ENCODE measurements at regions of chr3 and their contacts with region 1.

Region 1: DNA sequence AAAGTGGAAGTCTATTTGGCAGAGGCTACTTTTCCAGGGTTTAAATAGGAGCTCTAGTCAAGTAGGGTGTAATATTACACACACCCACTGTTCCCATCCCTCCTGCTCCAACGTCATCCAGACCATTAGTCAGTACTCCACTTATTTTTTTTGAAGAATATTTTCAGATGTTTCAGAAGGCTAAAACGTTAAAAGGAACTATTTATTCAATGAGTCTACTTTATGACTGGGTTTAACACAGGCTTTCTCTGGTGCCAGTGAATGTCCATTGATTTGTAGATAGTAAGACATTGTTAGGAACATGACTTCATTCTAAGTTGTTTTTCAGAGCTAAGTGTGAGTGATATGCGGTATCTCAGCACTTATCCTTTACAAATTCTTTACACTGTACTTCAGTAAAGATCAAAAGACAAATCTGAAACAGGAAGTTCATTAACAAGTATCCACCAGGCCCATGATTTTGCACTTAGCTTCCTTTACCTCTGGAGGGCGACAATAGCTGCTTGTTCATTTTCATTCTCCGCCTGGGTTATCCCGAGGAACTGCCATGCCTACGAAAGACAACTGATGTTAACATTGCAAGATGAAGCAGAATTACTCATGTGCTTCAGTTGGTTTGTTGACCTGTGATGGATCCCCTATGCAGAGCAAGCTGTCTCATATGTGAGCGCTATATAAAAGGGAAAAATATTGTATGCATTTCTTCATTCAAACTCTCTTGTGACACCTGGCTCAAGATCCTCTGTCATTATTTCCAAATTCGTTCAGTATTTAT is 158.7 kb downstream of the USP13 start:
- ATAC-seq: peak; percentile 42 to 98 (median 68)
- H3K4me3 ChIP-seq: no peak overlapping the region
- H3K27ac ChIP-seq: no peak overlapping the region
- H3K4me1 ChIP-seq: no peaks in the 10 kb centered on the region

Region 2: DNA sequence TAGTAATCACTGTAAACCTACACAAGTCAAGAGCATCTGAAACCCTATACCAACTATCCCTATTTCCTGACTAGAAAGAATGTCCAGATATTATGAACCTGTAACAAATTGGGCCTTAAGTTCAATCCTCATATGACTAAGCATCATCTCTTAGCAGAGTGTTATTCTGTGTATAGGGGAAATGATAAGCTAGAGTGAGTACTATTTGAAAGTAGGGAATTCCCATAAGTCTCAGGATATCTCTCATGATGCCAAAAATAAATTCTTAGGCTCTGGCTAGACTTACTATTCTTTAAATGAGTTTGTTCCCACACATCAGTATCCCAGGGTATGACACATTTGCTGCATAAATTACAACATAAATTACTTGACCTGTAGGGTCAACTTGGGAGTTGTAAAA is 222.4 kb before region 1 on chr3:
- in situ Hi-C with region 1: no loop called
- ATAC-seq: no peak
- H3K4me3 ChIP-seq: no peak overlapping the region
- H3K27ac ChIP-seq: no peak overlapping the region
- H3K4me1 ChIP-seq: no peaks in the 10 kb centered on the region

Region 3: DNA sequence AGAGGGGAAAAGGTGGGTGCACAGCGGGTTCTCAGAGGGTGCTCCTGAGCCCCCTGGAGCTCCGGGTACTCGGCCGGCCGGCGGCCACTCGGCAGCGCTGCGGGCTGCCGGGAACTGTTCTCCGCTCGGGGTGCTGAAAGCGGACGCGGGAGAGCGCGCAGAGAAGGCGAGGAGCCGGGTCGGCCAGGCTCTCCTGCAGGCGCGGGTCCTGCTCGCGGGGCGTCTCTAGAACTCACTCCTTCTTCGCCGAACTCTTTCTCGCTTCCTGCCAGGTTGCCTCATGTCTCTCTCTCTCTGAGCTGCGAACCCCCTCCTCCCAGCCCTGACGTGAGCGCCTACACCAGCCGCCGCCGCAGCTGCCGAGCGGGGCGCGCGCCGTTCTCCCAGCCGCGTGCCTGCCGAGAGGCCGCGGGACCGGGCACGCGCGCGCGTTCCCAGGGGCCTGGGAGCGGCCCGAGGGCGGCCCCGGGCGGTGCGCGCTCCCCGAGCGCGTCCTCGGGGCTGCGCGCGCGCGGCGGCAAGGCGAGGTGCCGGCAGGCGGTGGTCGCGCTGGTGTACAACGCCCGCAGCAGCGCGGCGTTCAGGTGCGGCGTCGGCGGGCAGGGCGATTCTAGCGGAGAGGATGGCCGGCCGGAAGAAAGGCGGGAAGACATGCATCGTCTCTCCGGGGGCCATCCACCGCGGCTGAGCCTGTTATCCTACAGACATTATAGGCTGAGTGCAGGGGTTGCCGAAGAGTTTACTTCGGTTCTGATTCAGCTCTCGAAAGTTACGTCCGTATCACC is 225.4 kb after region 1 on chr3 and contains the start of gene PEX5L:
- in situ Hi-C with region 1: loop called in 1 of 9 experiments (anchors 25 kb)
- ATAC-seq: peak; percentile 91 to 96 (median 94)
- H3K4me3 ChIP-seq: peak within 1 kb of the TSS; percentile 50 to 83 (median 56)
- H3K27ac ChIP-seq: no peak within 1 kb of the TSS
- H3K4me1 ChIP-seq: peaks cover 0 to 9% of the 10 kb centered on the region in 2 donors
- total RNA-seq, gene PEX5L: 3.6 to 76.9 (median 9.1) TPM

Measured in motor neuron (in vitro differentiated cells).